HAP-1 (cell line): ENCODE measurements at regions of chr17 and their contacts with region 1.

Region 1: GRCh38 chr17:4204710-4205173 is 59.0 kb downstream of the ANKFY1 start:
- DNase-seq: no peak
- H3K4me3 ChIP-seq: no peak overlapping the region
- H3K4me1 ChIP-seq: no peaks in the 10 kb centered on the region
- H3K27me3 ChIP-seq: no peaks in the 10 kb centered on the region

Region 2: DNA sequence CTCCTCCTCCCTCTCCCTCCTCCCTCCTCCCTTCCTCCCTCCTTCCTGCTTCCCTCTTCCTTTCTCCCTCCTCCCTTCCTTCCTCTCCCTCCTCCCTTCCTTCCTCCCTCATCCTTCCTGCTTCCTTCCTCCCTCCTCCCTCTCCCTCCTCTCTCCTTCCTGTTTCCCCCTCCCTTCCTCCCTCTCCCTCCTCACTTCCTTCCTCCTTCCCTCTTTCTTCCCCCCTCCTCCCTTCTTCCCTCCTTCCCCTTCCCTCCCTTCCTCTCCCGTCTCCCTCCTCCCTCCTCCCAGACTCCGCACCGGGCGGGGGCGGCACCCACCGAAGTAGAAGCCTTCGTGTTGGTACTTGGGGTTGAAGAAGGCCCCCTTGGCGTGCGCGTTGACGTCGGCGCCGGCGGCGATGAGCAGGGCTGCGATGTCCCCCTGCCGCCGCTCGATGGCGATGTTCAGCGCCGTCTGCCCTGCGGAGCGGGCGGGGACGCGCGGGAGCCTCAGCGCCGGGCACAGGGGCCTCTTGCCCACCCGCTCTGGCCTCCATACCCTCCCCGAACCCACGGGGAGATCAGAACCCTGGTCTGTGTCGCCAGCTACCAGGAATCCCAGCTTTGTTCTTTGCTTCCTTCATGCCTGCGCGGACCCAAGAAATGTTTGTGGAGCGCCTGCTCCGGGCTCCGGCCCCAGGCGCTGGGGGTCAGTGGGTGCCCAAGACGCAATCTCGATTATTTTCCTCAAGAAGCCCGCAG is 669.3 kb before region 1 on chr17:
- in situ Hi-C with region 1: no loop called
- DNase-seq: peak; percentile 53 to 83
- H3K4me3 ChIP-seq: peak overlapping the region; percentile 25
- H3K4me1 ChIP-seq: peaks cover 2% of the 10 kb centered on the region
- H3K27me3 ChIP-seq: no peaks in the 10 kb centered on the region

Region 3: GRCh38 chr17:4017377-4017776 is 187.4 kb before region 1 on chr17:
- in situ Hi-C with region 1: no loop called
- DNase-seq: no peak
- H3K4me3 ChIP-seq: no peak overlapping the region
- H3K4me1 ChIP-seq: no peaks in the 10 kb centered on the region
- H3K27me3 ChIP-seq: no peaks in the 10 kb centered on the region

Region 4: GRCh38 chr17:4263282-4264215 is 58.8 kb after region 1 on chr17 and contains the start of gene ANKFY1:
- in situ Hi-C with region 1: no loop called
- DNase-seq: peak; percentile 85 to 98
- H3K4me3 ChIP-seq: peak within 1 kb of the TSS; percentile 99
- H3K4me1 ChIP-seq: peaks cover 12% of the 10 kb centered on the region
- H3K27me3 ChIP-seq: no peaks in the 10 kb centered on the region

Region 5: GRCh38 chr17:4412933-4413831 is 208.4 kb after region 1 on chr17:
- in situ Hi-C with region 1: loop called (anchors 5 kb)
- DNase-seq: peak; percentile 79 to 97
- H3K4me3 ChIP-seq: no peak overlapping the region
- H3K4me1 ChIP-seq: peaks cover 3% of the 10 kb centered on the region; the same call in 1 of the 2 replicates
- H3K27me3 ChIP-seq: no peaks in the 10 kb centered on the region

Region 6: DNA sequence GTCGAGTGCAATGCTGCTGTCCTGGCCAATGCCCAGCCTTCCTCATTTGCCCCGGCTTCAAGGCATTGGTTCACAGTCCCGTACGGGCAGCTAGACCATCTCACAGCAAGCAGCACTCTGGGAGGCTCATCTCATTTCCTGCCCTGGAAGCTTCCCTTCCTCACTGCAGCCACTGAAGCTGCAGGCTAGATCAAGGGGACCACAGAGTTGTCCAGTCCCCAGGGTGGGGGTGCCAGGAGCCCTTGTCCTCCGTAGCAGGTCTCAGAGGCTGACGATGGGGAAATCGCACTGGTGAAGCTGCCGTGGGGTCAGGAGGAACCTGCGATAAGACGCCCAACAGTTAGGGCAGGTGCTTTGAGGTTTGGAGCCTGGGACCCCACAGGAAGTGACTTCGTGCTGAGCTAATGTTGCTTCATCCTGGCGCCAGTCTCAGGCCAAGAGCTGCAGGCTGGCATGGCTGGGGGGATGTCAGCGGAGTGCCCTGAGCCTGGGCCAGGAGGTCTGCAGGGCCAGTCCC is 228.8 kb after region 1 on chr17 and contains the start of gene SPNS3:
- in situ Hi-C with region 1: no loop called
- DNase-seq: no peak
- H3K4me3 ChIP-seq: no peak within 1 kb of the TSS
- H3K4me1 ChIP-seq: no peaks in the 10 kb centered on the region
- H3K27me3 ChIP-seq: no peaks in the 10 kb centered on the region